ENCODE measurements at regions of chr2 and their contacts with region 1.

Region 1: DNA sequence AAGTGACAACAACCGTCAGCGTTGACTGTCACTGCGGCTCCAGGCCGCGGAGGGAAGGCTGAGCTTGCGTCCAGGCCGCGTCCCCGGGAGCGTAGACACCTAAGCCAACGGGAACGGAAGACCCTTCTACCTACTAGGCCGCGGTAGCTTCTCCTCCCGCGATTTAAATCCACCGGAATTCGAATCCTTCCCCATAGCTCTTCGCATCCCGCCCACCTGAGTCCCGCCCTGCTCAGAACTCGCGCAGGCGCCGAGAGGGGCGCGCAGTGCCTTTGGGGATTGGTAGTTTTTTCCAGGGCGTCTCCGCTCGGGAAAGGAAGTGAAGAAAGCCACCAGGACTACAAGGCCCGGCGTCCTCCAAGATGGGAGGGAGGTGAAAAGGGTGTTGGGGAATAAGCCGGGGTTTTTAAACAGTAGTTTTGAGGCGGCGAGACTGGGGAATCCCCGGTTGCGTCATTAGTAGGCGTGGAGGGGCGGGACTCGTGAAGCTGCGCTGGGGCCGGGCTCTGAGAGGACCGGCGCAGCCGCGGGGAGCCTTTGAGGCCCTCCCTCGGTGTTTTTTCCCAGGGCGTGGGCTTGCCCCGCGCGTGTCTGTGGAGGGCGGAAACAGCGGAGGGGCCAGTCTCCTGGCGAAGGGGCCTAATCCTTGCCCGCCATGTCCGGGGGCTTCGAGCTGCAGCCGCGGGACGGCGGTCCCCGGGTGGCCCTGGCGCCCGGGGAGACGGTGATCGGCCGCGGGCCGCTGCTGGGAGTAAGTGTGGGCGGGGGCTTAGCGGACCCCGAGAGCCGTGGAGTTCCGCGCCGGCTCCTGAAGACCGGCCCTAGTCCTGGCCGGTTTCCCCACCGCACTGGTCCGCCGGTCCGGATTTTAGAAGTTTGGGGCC is at the starts of genes APLF and FBXO48:
- DNase-seq: peak; percentile 98 to 100 (median 99)
- H3K4me3 ChIP-seq: peak within 1 kb of the TSS; percentile 85 to 98
- H3K4me3 Mint-ChIP-seq: peak within 1 kb of the TSS; percentile 90 to 97 (median 96)
- H3K27ac ChIP-seq: peak within 1 kb of the TSS; percentile 96
- H3K27ac Mint-ChIP-seq: peak within 1 kb of the TSS; percentile 89 to 98 (median 97)
- H3K4me1 ChIP-seq: peaks cover 45% of the 10 kb centered on the region
- H3K4me1 Mint-ChIP-seq: peaks cover 25 to 55% (median 38%) of the 10 kb centered on the region in 4 donors
- H3K27me3 ChIP-seq: no peaks in the 10 kb centered on the region
- H3K27me3 Mint-ChIP-seq: no peaks in the 10 kb centered on the region
- total RNA-seq, gene APLF: 8.2 to 9.5 TPM
- total RNA-seq, gene FBXO48: 6.4 to 6.5 TPM

Region 2: DNA sequence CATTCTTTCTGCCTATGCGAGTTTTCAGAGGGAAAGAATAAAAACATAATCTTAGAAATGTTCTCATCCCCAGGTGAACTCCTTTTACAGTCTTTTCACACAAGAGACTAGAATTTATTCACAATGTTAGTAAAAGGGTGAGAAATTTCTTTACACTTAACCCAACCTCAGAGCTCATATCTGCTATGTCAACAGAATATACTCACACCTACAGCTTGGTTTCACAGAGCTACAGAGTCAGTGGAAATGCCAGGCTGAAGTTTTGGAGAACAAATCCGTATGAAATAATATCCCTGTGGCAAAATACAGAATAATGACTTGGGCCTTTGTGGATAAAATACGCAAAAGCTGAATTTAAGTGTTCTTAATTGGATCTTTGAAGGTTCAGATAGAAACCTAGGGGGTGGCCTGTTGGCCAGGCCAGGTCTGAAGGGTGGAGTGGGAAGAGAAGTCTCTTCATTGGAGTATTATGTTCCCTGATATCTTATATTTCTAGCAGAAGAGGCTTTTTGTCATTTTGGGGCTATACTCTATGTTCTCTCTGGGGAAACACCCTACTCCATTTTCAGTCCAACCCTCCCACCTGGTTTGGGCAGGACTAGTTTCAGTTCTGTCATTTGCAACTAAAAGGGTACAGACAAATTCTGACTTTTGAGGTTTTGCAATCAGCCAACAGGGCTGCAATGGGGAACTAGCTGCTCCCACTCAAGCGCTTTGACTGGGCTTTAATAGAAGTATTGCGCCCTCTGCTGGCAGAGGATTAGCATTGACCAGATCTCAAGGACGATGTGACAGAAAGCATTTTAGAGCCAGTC is 25.9 kb before region 1 on chr2:
- CTCF ChIA-PET with region 1: interaction called, 19 read pairs
- POLR2A ChIA-PET with region 1: no interaction called
- intact Hi-C with region 1: no loop called
- DNase-seq: peak; percentile 78 to 87 (median 83)
- H3K4me3 ChIP-seq: no peak overlapping the region
- H3K4me3 Mint-ChIP-seq: peak overlapping the region in 5 of 8 donors; percentile 24 to 62 (median 37)
- H3K27ac ChIP-seq: peak overlapping the region; percentile 3
- H3K27ac Mint-ChIP-seq: peak overlapping the region; percentile 65 to 94 (median 89)
- H3K4me1 ChIP-seq: peaks cover 16% of the 10 kb centered on the region
- H3K4me1 Mint-ChIP-seq: peaks cover 8 to 24% (median 15%) of the 10 kb centered on the region in 4 donors
- H3K27me3 ChIP-seq: no peaks in the 10 kb centered on the region
- H3K27me3 Mint-ChIP-seq: no peaks in the 10 kb centered on the region

Region 3: GRCh38 chr2:68506170-68506569 is 38.9 kb after region 1 on chr2:
- CTCF ChIA-PET with region 1: interaction called, 16 read pairs
- POLR2A ChIA-PET with region 1: interaction called, 41 read pairs
- intact Hi-C with region 1: no loop called
- DNase-seq: peak in 2 of 5 donors; percentile 13 to 22
- H3K4me3 ChIP-seq: peak overlapping the region in 1 of 2 donors; percentile 17
- H3K4me3 Mint-ChIP-seq: peak overlapping the region; percentile 4 to 80 (median 64)
- H3K27ac ChIP-seq: no peak overlapping the region
- H3K27ac Mint-ChIP-seq: peak overlapping the region; percentile 25 to 87 (median 74)
- H3K4me1 ChIP-seq: peaks cover 27% of the 10 kb centered on the region
- H3K4me1 Mint-ChIP-seq: peaks cover 17 to 27% (median 22%) of the 10 kb centered on the region in 4 donors
- H3K27me3 ChIP-seq: no peaks in the 10 kb centered on the region
- H3K27me3 Mint-ChIP-seq: no peaks in the 10 kb centered on the region

Region 4: GRCh38 chr2:68715353-68716041 is 248.2 kb after region 1 on chr2:
- CTCF ChIA-PET with region 1: interaction called, 64 read pairs
- POLR2A ChIA-PET with region 1: interaction called, 21 read pairs
- intact Hi-C with region 1: loop called (anchors 2 kb)
- DNase-seq: peak; percentile 39 to 55 (median 45)
- H3K4me3 ChIP-seq: peak overlapping the region in 1 of 2 donors; percentile 37
- H3K4me3 Mint-ChIP-seq: peak overlapping the region in 7 of 8 donors; percentile 44 to 76 (median 56)
- H3K27ac ChIP-seq: peak overlapping the region; percentile 29
- H3K27ac Mint-ChIP-seq: peak overlapping the region; percentile 54 to 93 (median 86)
- H3K4me1 ChIP-seq: peaks cover 63% of the 10 kb centered on the region
- H3K4me1 Mint-ChIP-seq: peaks cover 63 to 88% (median 70%) of the 10 kb centered on the region in 4 donors
- H3K27me3 ChIP-seq: no peaks in the 10 kb centered on the region
- H3K27me3 Mint-ChIP-seq: no peaks in the 10 kb centered on the region

Region 5: DNA sequence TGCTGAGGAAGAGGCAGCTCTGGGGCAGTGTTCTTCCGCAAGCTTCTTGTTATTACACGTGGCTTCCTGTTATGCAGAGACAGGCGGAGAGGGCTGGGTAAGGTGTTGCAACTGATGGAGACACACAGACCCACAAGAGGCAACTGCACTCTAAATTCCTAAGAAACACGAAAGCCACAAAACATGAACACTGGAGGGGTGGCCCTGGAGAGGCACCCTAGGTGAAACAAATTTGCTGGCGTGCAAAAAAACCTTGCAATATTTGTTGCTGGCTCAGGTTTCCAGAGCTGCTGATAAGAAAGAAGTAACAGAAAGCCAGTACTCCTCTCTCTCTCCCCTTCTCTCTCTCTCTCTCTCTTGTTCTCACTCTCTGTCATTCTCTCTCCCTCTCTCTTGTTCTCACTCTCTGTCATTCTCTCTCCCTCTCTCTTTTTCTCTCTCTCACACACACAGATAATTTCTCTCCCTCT is 299.1 kb after region 1 on chr2:
- CTCF ChIA-PET with region 1: interaction called, 4 read pairs
- POLR2A ChIA-PET with region 1: interaction called, 10 read pairs
- intact Hi-C with region 1: loop called (anchors 5 kb)
- DNase-seq: peak; percentile 79 to 89 (median 81)
- H3K4me3 ChIP-seq: peak overlapping the region; percentile 12 to 47
- H3K4me3 Mint-ChIP-seq: peak overlapping the region; percentile 78 to 95 (median 86)
- H3K27ac ChIP-seq: peak overlapping the region; percentile 90
- H3K27ac Mint-ChIP-seq: peak overlapping the region; percentile 95 to 99 (median 98)
- H3K4me1 ChIP-seq: peaks cover 99% of the 10 kb centered on the region
- H3K4me1 Mint-ChIP-seq: peaks cover 85 to 99% (median 92%) of the 10 kb centered on the region in 4 donors
- H3K27me3 ChIP-seq: no peaks in the 10 kb centered on the region
- H3K27me3 Mint-ChIP-seq: peaks cover 0 to 2% of the 10 kb centered on the region in 2 donors

Region 6: DNA sequence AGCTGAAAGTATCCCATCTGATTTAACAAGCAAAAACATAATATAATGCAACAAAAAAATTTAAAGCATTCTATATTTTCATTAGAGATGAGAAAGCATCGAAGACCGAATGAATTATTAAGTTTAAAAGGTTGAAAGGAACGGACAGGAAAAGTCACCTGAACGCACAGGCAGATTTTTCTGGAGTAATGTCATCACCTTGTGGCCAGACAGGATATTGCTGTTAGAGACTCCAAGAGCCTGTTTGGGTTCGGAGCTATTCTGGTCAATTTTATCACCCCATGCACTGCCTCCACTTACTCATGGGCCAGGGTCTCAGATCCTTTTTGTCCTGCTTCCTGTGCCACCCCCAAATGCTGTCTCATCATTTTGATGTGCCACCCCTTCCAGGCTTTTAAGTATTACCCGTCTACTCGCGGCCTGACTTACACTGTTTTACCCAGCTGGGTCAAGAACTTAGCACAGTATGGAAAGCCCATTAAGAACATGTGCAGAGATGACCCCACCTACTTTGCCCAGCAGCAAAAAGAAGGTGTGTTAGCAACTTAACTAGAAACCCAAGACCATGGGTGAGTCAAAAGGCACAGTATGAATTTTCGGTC is 458.1 kb after region 1 on chr2:
- CTCF ChIA-PET with region 1: interaction called, 101 read pairs
- POLR2A ChIA-PET with region 1: interaction called, 14 read pairs
- intact Hi-C with region 1: loop called (anchors 1 kb)
- DNase-seq: peak; percentile 57 to 73 (median 66)
- H3K4me3 ChIP-seq: no peak overlapping the region
- H3K4me3 Mint-ChIP-seq: peak overlapping the region in 1 of 8 donors; percentile 17
- H3K27ac ChIP-seq: no peak overlapping the region
- H3K27ac Mint-ChIP-seq: peak overlapping the region in 3 of 7 donors; percentile 17 to 43 (median 24)
- H3K4me1 ChIP-seq: peaks cover 4% of the 10 kb centered on the region
- H3K4me1 Mint-ChIP-seq: peaks cover 0 to 4% (median 2%) of the 10 kb centered on the region in 4 donors
- H3K27me3 ChIP-seq: no peaks in the 10 kb centered on the region
- H3K27me3 Mint-ChIP-seq: peaks cover 5 to 6% of the 10 kb centered on the region in 2 donors

Measured in CD4-positive, alpha-beta memory T cell (primary cell).